ENCODE measurements at regions of chr5 and their contacts with region 1.

Region 1: DNA sequence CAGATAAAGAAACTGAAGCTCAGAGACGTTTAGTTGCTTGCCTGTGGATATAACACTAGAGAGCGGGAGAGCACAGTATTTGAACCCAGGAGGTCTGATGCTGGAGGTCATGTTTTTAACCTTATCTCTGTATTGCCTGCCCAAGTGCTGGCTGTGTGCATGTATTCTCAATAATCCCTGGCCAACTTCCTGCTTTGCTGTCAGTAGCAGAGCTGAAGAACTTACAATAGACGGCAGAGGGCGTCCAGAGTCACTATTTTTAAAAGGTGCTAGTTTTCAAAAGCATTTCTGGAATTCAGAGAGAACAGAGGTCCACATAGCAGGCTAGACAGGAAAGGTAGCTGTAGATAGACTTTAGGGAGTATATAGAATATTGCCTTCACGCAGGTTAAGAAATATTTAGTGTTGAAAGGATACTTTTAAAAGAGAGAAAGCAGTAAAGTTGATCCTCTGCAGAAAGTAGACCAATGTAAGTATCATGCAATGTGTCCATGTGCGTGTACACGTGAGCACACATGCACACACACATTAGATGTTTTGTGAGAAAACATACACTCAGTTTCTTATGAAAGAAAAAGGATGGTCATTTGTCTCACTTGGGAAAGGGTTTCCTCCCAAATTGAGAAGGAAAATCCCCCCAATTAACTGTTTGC is 46.3 kb downstream of the PTCD2 start:
- DNase-seq: no peak
- H3K4me3 ChIP-seq: no peak overlapping the region
- CTCF ChIP-seq: peak; percentile 60

Region 2: GRCh38 chr5:72330712-72331111 is 35.7 kb before region 1 on chr5:
- CTCF ChIA-PET with region 1: no interaction called
- POLR2A ChIA-PET with region 1: no interaction called
- DNase-seq: no peak
- H3K4me3 ChIP-seq: no peak overlapping the region
- CTCF ChIP-seq: no peak

Region 3: DNA sequence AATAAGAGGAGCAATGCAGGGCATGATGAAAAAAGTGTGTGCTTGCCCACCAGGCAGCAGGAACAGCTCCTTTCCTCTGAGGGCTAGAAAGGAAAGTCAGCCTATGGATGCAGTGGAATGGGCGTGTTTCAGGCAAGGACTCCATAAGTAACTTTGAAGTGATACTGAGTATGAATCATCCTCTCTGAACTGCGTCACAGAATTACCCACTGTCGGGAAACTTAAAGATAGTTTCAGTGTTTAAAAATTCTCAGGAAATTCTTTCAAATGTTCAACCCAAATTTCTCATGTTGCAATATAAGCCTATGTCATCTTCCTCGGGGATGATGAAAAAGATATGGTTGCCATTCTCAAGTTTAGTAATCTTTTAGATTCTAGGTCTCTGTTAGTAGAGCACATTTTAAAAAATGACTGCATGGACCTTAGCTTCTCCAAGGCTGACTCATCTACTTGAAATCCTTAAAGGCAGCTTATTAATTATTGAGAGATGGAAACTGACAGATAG is 18.6 kb before region 1 on chr5:
- CTCF ChIA-PET with region 1: interaction called, 12 read pairs
- POLR2A ChIA-PET with region 1: no interaction called
- DNase-seq: peak; percentile 84
- H3K4me3 ChIP-seq: no peak overlapping the region
- CTCF ChIP-seq: no peak

Region 4: GRCh38 chr5:72355706-72356299 is 10.6 kb before region 1 on chr5:
- CTCF ChIA-PET with region 1: interaction called, 29 read pairs
- POLR2A ChIA-PET with region 1: no interaction called
- DNase-seq: no peak
- H3K4me3 ChIP-seq: no peak overlapping the region
- CTCF ChIP-seq: peak; percentile 58

Region 5: DNA sequence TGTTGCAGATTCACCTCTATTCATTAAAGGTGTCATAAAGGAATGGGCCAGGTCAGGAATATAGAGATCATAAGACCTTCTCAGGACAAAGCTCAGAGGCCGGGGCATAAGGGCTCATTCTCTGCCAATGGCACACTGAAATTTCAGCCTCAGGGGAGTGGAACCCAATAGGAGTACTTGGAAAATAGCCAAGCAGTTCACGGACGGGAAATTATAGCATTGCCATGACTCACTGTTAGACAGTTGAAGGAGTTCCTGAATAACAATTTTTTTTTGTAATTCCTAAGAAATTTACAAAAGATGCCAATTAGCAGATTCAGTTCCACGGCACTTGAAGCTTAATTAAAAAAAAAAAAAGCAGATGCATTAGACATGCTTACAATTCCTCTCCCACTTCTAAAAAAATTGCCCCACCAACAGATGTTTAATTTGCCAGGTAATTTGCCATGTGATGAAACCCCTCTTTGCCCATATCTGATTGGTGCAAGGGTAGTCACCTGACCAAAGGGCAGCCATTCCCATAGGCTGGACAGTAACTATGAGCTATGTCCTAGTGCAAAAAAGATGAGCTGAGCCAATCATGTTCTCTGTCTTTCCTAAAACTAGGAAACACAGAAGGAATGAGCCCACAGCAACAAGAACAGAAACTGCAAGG is 12.3 kb after region 1 on chr5:
- CTCF ChIA-PET with region 1: interaction called, 44 read pairs
- POLR2A ChIA-PET with region 1: no interaction called
- DNase-seq: no peak
- H3K4me3 ChIP-seq: no peak overlapping the region
- CTCF ChIP-seq: no peak

Region 6: GRCh38 chr5:72441861-72442540 is 75.6 kb after region 1 on chr5:
- CTCF ChIA-PET with region 1: interaction called, 12 read pairs
- POLR2A ChIA-PET with region 1: no interaction called
- DNase-seq: peak; percentile 91
- H3K4me3 ChIP-seq: no peak overlapping the region
- CTCF ChIP-seq: no peak

Region 7: DNA sequence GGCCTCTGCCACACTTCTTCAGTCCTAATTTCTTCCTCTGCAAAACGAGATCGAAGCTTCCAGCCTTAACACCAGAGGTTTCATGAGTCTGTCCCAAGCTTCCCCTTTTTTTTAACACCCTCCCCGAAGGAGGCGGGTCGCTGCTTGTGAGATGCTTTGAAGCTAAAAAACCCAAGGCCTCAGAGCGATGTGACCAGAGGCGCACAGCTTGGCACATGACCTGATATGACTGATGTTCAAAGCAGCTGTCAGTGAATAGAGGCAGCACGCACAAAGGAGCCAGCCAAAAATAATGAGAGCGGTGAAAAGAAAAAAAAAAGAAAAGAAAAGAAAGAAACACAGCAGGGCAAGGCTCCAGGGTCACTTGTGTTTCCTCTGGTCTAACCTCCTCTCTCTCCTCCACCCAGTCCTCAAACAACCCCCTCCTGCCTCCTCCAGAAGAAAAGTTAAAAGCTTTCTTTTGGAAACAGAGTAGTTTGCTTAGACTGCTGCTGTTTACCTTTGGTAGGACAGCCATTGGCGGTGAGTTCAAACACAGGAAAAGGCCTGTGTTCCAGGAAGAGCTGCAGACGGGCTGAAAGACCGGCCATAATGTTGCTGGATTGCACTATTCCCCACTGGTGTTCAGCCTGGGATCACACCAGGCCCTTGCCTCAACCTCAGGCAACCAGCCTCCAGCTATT is 151.7 kb after region 1 on chr5:
- CTCF ChIA-PET with region 1: interaction called, 121 read pairs
- POLR2A ChIA-PET with region 1: no interaction called
- DNase-seq: no peak
- H3K4me3 ChIP-seq: no peak overlapping the region
- CTCF ChIP-seq: no peak

Region 8: DNA sequence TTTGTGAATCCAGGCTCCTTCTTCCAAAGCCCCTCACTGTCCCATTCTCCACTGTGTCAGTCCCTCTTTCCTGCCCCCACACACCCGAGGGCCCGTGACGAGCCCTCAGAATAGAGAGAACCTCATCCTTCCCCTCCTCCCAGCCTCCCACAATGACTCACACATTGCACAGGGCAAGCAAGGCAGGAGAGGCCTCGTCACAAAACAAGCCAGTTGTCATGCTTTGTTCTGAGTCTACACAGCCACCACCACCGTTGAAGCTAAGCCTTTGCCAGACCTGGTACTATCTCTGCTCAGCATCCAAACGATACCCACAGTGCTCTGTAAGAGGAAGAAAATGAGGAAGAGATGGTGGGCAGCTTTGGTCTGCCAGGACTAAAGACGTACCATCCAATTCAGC is 283.0 kb after region 1 on chr5:
- CTCF ChIA-PET with region 1: no interaction called
- POLR2A ChIA-PET with region 1: no interaction called
- DNase-seq: no peak
- H3K4me3 ChIP-seq: no peak overlapping the region
- CTCF ChIP-seq: no peak

Region 9: DNA sequence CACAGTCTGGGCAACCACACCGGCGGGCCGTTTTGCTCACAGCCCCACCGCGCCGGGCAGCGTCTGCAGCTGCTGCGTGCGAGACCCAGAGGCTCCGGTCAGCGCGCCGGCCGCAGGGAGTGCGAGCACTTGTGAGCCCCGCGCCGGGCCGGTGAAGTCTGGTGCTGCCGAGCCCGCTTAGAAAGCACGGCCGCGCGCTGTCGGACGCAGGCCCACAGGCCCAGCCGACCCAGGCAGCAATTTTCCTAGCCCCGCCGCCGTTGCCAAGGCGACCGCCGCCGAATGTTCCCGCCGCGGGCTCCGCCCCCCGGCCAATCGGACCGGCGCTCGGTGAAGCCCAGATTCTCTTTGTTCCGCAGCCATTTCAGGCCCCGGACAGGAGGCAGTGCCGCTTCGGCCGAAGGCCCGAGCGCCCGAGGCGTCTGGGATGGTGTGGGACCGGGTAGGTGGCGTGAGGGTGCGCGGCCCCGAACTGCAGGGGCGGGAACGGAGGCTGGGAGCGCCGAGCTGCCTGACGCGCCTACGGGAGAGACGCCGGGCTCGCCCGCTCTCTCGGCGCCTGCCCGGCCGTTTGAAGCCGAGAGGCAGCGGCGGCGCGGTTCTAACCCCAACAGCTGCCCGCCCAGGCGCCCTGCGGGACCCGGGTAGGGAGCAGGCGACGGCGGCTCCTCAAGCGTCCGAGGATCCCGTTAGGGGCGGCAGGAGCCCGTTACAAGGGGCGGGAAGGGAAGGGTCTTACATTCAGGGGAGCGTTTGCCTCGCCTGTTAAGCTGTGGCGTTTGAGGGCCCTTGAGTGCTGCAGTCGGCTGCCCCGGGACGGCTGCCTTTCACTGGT is 450.1 kb after region 1 on chr5 and contains the start of gene TNPO1:
- CTCF ChIA-PET with region 1: interaction called, 29 read pairs
- POLR2A ChIA-PET with region 1: no interaction called
- DNase-seq: peak; percentile 46
- H3K4me3 ChIP-seq: peak within 1 kb of the TSS; percentile 77
- CTCF ChIP-seq: no peak